ENCODE measurements at regions of chr19 and their contacts with region 1.

Region 1: GRCh38 chr19:7652061-7652641 is 15.2 kb downstream of the STXBP2 start:
- DNase-seq: peak; percentile 49 to 99
- H3K4me3 ChIP-seq: peak overlapping the region in 2 of 4 experiments; percentile 0 to 45; a peak in 2 of 8 replicates
- H3K27ac ChIP-seq: no peak overlapping the region
- H3K4me1 ChIP-seq: peaks cover 0 to 2% (median 0%) of the 10 kb centered on the region in 4 experiments; a peak in 4 of 7 replicates
- H3K27me3 ChIP-seq: peaks cover 2 to 18% (median 6%) of the 10 kb centered on the region in 4 experiments
- CTCF ChIP-seq: peak; percentile 72 to 87 (median 79)
- EP300 ChIP-seq: no peak
- POLR2A ChIP-seq: no peak
- RAD21 ChIP-seq: peak; percentile 58 to 59

Region 2: GRCh38 chr19:7636691-7637373 is 15.3 kb before region 1 on chr19 and contains the start of gene STXBP2:
- CTCF ChIA-PET with region 1: interaction called, 10 read pairs
- POLR2A ChIA-PET with region 1: interaction called, 7 read pairs
- DNase-seq: peak; percentile 64 to 97
- H3K4me3 ChIP-seq: peak within 1 kb of the TSS; percentile 67 to 88 (median 68)
- H3K27ac ChIP-seq: 0 out of 2 replicates have a peak within 1 kb of the TSS, but pooled peaks have one; percentile 23
- H3K4me1 ChIP-seq: peaks cover 0 to 6% (median under 1%) of the 10 kb centered on the region in 4 experiments; a peak in 3 of 7 replicates
- H3K27me3 ChIP-seq: peaks cover 3 to 19% (median 16%) of the 10 kb centered on the region in 4 experiments
- CTCF ChIP-seq: peak in 1 of 3 experiments; percentile 6; a peak in 1 of 4 replicates
- EP300 ChIP-seq: no peak
- POLR2A ChIP-seq: peak in 1 of 2 experiments; percentile 69; a peak in 1 of 3 replicates
- RAD21 ChIP-seq: peak in 1 of 2 experiments; percentile 16; a peak in 1 of 4 replicates
- total RNA-seq, gene STXBP2: 51.5 and 52.9 TPM in 2 replicates

Region 3: GRCh38 chr19:7665076-7665475 is 12.9 kb after region 1 on chr19:
- CTCF ChIA-PET with region 1: interaction called, 11 read pairs
- POLR2A ChIA-PET with region 1: no interaction called
- DNase-seq: no peak
- H3K4me3 ChIP-seq: no peak overlapping the region
- H3K27ac ChIP-seq: no peak overlapping the region
- H3K4me1 ChIP-seq: peaks cover 0 to 3% (median 1%) of the 10 kb centered on the region in 4 experiments; a peak in 1 of 7 replicates
- H3K27me3 ChIP-seq: peaks cover 0 to 12% (median 8%) of the 10 kb centered on the region in 4 experiments; a peak in 4 of 7 replicates
- CTCF ChIP-seq: no peak
- EP300 ChIP-seq: no peak
- POLR2A ChIP-seq: no peak
- RAD21 ChIP-seq: no peak

Measured in H1 (cell line).